Activated CD4-positive, alpha-beta memory T cell treated with anti-CD3 and anti-CD28 coated beads for 36 hours (primary cell): ENCODE measurements at regions of chr12 and their contacts with region 1.

Region 1: GRCh38 chr12:7933255-7933729 is 2.7 kb downstream of the SLC2A3 start:
- DNase-seq: peak; percentile 85
- H3K4me3 Mint-ChIP-seq: no peak overlapping the region
- H3K27ac Mint-ChIP-seq: no peak overlapping the region
- H3K4me1 Mint-ChIP-seq: peaks cover 29% of the 10 kb centered on the region
- H3K27me3 Mint-ChIP-seq: no peaks in the 10 kb centered on the region

Region 2: GRCh38 chr12:7571257-7571656 is 362.0 kb before region 1 on chr12:
- CTCF ChIA-PET with region 1: no interaction called
- POLR2A ChIA-PET with region 1: no interaction called
- intact Hi-C with region 1: no loop called
- DNase-seq: no peak
- H3K4me3 Mint-ChIP-seq: no peak overlapping the region
- H3K27ac Mint-ChIP-seq: no peak overlapping the region
- H3K4me1 Mint-ChIP-seq: no peaks in the 10 kb centered on the region
- H3K27me3 Mint-ChIP-seq: peaks cover 12% of the 10 kb centered on the region

Region 3: GRCh38 chr12:7645394-7646177 is 287.7 kb before region 1 on chr12:
- CTCF ChIA-PET with region 1: interaction called, 4 read pairs
- POLR2A ChIA-PET with region 1: no interaction called
- intact Hi-C with region 1: loop called (anchors 10 kb)
- DNase-seq: peak; percentile 18
- H3K4me3 Mint-ChIP-seq: no peak overlapping the region
- H3K27ac Mint-ChIP-seq: no peak overlapping the region
- H3K4me1 Mint-ChIP-seq: peaks cover 11% of the 10 kb centered on the region
- H3K27me3 Mint-ChIP-seq: no peaks in the 10 kb centered on the region

Region 4: DNA sequence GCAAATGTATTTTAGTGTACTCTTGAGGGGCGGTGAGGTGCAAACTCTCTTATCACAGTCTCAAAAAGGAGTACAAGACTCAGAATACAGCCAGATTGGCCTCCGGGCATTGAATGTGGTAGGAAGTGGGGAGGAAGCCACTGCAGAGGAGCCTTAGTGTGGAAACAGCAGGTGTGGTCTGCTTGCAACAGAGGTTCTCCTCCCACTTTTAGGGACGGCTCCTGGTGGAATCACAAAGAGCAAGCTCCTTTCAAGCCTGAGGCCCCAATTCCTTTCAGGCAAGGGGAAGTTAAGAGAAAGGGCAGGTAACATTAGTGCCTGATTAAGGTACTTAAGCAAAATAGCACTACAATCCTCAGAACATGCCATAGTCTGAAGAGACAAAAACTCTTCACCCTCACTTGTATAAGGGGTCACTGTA is 26.4 kb after region 1 on chr12:
- CTCF ChIA-PET with region 1: interaction called, 161 read pairs
- POLR2A ChIA-PET with region 1: interaction called, 254 read pairs
- intact Hi-C with region 1: loop called (anchors 1 kb)
- DNase-seq: peak; percentile 68
- H3K4me3 Mint-ChIP-seq: peak overlapping the region; percentile 87
- H3K27ac Mint-ChIP-seq: peak overlapping the region; percentile 94
- H3K4me1 Mint-ChIP-seq: peaks cover 33% of the 10 kb centered on the region
- H3K27me3 Mint-ChIP-seq: no peaks in the 10 kb centered on the region

Region 5: GRCh38 chr12:7989827-7990551 is 56.7 kb after region 1 on chr12:
- CTCF ChIA-PET with region 1: interaction called, 135 read pairs
- POLR2A ChIA-PET with region 1: interaction called, 65 read pairs
- intact Hi-C with region 1: loop called (anchors 1 kb)
- DNase-seq: peak; percentile 90
- H3K4me3 Mint-ChIP-seq: peak overlapping the region; percentile 44
- H3K27ac Mint-ChIP-seq: peak overlapping the region; percentile 87
- H3K4me1 Mint-ChIP-seq: peaks cover 40% of the 10 kb centered on the region
- H3K27me3 Mint-ChIP-seq: no peaks in the 10 kb centered on the region

Region 6: GRCh38 chr12:8026291-8026900 is 93.1 kb after region 1 on chr12:
- CTCF ChIA-PET with region 1: interaction called, 13 read pairs
- POLR2A ChIA-PET with region 1: interaction called, 11 read pairs
- intact Hi-C with region 1: loop called (anchors 1 kb)
- DNase-seq: peak; percentile 98
- H3K4me3 Mint-ChIP-seq: peak overlapping the region; percentile 88
- H3K27ac Mint-ChIP-seq: peak overlapping the region; percentile 100
- H3K4me1 Mint-ChIP-seq: peaks cover 9% of the 10 kb centered on the region
- H3K27me3 Mint-ChIP-seq: no peaks in the 10 kb centered on the region